ENCODE measurements at regions of chr3 and their contacts with region 1.

Region 1: DNA sequence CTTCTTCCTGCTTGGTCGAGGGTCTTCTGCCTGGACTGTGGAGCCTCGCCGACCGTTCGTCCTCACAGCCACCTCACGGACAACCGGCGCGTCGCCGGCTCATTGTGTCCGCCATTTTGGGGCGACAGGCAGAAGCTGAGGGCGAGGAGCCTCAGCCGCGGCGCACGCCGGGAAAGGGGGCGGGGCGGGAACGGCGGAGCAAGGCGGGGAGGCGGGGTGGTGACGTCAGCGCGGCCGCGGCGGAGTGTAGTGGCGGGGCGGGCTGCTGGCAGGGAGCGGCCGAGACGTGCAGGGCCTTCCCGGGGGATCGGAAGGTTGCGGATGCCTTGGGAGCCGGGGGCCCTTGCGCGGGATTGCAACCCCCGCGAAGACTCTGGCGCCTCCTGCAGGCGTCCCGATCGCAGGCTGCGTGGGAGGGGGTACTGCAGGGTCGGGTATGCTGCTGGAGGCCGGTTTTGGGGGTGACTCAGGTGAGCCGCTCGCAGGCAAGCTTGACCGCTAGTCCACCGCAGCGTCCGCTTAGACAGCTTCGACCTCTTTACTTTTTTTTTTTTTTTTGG is at the start of gene WDR82:
- DNase-seq: peak; percentile 98
- H3K4me3 Mint-ChIP-seq: peak within 1 kb of the TSS; percentile 95
- H3K27ac Mint-ChIP-seq: peak within 1 kb of the TSS; percentile 98
- H3K4me1 Mint-ChIP-seq: peaks cover 57% of the 10 kb centered on the region
- H3K27me3 Mint-ChIP-seq: no peaks in the 10 kb centered on the region

Region 2: DNA sequence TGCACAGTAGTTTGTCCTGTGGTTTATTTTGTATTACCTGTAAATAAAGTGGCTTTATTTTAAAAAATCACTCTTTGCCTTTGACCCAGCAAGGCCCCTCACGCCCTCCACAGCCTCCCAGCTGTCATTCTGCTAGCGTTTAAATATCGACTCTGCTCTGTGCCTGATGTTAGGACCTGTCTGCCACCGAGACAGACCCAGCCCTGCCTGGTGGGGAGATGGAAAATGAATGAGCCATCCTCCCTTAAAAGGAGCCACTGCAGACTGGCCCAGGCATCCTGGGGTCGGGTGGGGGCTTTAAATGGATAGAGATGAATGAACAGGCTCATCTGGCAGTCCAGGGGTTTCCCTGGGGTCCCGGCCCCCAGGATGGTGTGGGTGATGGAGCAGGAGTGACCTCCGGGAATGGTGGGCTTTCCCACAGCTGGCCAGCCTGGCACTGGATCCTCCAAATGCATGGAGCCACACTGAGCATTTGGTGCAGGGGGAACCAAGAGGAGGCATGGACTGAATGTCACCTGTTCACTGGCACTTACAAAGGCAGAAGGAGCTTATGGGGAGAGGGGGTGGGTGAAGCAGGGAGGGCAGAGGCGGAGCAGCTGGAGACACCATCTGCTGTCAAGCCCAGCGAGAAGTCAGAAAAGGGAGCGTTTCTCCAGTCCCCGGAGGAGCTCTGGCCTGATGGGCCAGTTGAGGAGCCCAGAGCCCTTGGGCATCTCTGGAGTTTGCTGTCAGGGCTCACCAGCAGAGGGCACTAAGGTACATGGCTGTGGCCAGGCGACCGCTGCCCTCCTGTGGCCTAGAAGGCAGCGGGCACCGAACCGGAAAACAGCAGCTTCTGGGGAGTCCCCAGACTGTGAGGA is 559.8 kb before region 1 on chr3:
- CTCF ChIA-PET with region 1: no interaction called
- DNase-seq: peak; percentile 85
- H3K4me3 Mint-ChIP-seq: no peak overlapping the region
- H3K27ac Mint-ChIP-seq: peak overlapping the region; percentile 26
- H3K4me1 Mint-ChIP-seq: peaks cover 36% of the 10 kb centered on the region
- H3K27me3 Mint-ChIP-seq: no peaks in the 10 kb centered on the region

Region 3: DNA sequence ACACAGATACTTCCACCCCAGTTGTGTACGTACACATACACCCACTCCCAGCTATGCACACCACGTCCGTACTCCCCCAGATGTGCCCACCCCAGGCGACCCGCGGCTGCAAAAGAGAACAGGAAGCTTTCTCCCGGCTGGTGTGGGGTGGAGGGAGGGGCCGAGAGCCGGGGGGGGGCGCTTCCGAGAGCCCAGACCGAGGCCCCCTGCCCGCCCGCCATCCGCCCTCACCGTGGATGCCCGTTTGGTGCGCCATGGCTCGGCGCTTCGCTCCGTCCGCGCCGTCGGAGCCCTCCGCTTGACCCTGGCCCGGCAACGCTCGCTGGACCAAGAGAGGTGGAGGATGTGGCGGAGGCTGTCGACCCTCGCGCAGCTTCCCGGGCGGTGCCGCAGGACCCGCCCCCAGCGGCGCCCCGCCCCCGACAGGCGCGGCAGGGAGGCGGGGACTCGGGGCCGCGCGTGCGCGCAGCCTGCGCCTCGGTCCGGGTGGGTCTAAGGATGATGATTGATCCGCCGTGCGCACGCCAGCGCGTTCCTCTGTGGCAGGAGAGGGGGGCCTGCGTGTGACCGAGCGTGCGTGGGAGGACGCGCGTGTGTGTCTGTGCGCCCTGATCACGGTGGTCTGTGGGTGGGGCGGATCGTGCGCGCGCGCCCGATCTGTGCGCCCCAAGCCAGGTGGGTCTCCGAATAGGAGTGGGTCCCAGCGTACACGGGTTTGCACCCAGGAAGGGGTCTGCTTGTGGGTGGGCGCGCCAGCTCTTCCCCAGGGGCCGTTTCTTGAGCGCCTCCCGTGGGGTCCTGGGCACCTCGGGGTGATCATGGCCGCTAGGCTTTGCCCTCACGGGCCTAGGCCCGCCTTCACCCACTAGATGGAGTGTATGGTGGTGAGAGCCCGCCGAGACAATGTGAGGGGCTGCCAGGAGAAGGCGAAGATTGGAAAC is 39.6 kb before region 1 on chr3 and contains the start of gene TWF2:
- CTCF ChIA-PET with region 1: interaction called, 106 read pairs
- DNase-seq: peak; percentile 88
- H3K4me3 Mint-ChIP-seq: peak within 1 kb of the TSS; percentile 96
- H3K27ac Mint-ChIP-seq: peak within 1 kb of the TSS; percentile 96
- H3K4me1 Mint-ChIP-seq: peaks cover 80% of the 10 kb centered on the region
- H3K27me3 Mint-ChIP-seq: no peaks in the 10 kb centered on the region

Region 4: DNA sequence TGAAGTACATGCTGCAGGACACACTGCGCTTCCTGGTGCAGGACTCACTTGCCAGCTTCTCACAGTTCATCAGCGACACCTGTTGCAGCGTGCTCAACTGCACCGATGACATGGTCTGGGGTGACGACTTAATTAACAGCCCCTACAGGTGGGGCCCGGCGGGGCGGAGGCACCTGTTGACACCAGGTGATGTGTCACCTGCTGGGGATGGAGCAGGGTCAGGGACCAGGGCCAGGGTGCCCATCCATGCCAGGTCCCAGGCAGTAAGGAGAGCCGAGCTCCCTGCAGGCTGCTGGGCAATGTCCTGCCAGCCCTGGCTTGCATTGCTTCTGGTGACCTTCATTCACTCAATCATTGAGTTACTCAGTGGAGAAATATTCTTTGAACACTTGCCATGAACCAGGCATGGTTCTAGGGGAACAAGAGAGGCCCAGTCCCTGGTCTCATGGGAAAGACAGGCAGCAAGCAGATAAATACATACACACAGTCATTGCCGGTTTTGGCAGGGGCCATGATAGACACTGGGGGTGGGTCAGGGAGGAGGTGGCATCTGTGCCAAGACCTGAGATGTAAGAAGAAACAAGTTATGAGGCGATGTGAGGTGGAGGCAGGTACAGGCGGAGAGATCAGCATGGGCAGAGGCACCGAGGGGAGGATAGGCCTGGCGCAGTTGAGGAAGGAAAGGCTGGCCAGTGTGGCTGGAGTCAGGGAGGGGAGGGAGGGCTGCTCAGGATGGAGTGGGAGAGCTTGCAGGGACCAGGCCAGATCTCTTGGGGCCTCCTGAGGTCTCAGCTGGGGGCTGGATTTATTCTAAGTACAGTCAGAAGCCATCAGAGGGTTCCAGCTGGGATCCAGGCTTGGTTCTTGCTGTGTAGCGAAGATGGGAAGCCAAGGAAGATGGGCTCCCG is 68.3 kb after region 1 on chr3:
- CTCF ChIA-PET with region 1: no interaction called
- DNase-seq: no peak
- H3K4me3 Mint-ChIP-seq: no peak overlapping the region
- H3K27ac Mint-ChIP-seq: no peak overlapping the region
- H3K4me1 Mint-ChIP-seq: no peaks in the 10 kb centered on the region
- H3K27me3 Mint-ChIP-seq: no peaks in the 10 kb centered on the region